ENCODE measurements at regions of chr9 and their contacts with region 1.

Region 1: GRCh38 chr9:105881654-105882349 is 187.5 kb downstream of the TMEM38B start:
- DNase-seq: no peak
- H3K4me3 ChIP-seq: no peak overlapping the region
- H3K27me3 ChIP-seq: no peaks in the 10 kb centered on the region
- CTCF ChIP-seq: peak; percentile 89

Region 2: GRCh38 chr9:105822814-105823213 is 59.0 kb before region 1 on chr9:
- CTCF ChIA-PET with region 1: no interaction called
- POLR2A ChIA-PET with region 1: no interaction called
- DNase-seq: no peak
- H3K4me3 ChIP-seq: no peak overlapping the region
- H3K27me3 ChIP-seq: no peaks in the 10 kb centered on the region
- CTCF ChIP-seq: no peak

Region 3: DNA sequence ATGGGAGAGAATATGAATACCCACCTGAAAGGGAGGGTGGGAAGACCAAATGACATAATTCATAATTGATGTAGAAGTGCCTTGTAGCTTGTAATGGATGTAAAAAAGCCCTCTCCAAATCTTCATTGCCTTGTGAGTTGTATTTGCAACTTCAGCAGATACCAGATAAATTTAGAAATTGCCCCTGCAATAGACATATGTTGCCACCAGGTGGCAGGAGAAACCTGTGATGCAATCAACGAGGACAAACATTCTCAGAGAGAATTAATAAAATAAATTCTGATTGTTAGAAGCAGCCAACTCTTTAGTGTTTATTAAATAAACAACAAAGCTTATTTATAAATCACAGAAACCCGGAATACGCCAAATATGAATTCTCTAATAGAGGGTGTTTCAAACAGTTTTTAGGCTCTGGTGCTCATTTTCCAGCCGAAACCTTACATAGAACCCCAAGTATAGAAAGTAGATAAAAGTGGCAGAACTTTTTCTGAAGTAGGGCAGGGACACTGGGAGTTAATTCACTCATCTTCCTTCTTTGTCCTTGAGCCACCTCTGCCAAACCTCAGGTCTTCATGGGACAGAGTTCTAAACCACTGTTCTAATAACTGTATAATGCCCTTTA is 39.7 kb before region 1 on chr9:
- CTCF ChIA-PET with region 1: interaction called, 20 read pairs
- POLR2A ChIA-PET with region 1: no interaction called
- DNase-seq: no peak
- H3K4me3 ChIP-seq: no peak overlapping the region
- H3K27me3 ChIP-seq: no peaks in the 10 kb centered on the region
- CTCF ChIP-seq: peak; percentile 81

Region 4: DNA sequence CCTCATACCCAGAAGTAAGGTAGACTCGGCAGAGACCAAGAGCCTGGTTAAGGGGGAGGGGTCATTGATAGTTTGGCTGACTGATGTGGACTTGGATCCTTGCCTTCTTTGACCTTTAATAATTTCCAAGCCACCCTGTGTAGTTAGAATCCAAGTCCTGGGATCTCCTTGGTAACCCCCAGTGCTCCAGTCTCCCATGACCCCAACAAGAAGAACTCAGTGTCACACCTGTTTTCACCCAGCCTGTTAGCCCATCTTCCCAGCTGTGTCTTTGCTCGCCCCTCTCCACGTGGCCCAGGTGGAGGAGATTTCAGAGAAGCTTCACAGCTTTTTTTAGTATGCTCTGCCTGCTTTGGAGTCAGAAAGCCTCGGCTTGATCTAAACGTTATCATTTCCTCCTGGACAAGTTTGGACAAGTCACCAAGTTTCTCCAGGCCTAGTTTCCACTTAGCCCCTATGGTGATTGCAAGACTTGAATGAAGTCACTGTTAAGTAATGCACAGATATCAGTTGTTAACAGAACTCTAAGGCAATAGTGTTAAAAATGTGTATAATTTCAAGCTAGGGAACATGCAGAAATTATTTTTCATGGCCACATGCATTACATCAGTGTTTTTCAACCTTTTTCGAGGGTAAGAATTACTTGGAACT is 17.4 kb before region 1 on chr9:
- CTCF ChIA-PET with region 1: interaction called, 11 read pairs
- POLR2A ChIA-PET with region 1: no interaction called
- DNase-seq: no peak
- H3K4me3 ChIP-seq: no peak overlapping the region
- H3K27me3 ChIP-seq: no peaks in the 10 kb centered on the region
- CTCF ChIP-seq: no peak

Region 5: DNA sequence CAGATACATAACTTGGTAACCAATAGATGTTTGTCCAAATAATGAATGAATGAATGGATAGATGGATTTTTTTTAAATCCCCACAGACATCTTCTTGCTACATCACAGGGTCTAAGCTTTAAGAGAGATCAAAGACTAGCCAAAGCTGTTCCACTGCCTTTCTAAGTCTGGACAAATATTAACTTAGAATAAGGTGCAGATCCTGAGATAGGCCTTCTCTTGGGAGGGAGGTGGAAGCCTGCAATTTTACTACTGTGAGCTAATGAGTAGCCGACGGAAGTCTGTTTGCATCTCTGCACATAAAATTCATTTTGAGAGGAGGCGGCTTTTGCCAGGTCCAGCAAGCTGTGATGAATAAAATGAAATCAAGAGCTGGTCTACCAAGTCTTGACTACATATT is 297.4 kb after region 1 on chr9:
- CTCF ChIA-PET with region 1: no interaction called
- POLR2A ChIA-PET with region 1: no interaction called
- DNase-seq: no peak
- H3K4me3 ChIP-seq: no peak overlapping the region
- H3K27me3 ChIP-seq: no peaks in the 10 kb centered on the region
- CTCF ChIP-seq: no peak